Gastrocnemius medialis (tissue), 4 donors: ENCODE measurements at regions of chrX and their contacts with region 1.

Region 1: GRCh38 chrX:70433848-70434351 is 10.7 kb upstream of the DLG3 start:
- DNase-seq: peak; percentile 60 to 73
- ATAC-seq: peak; percentile 75 to 84
- H3K4me3 ChIP-seq: peak overlapping the region; percentile 68 to 79 (median 70)
- H3K27ac ChIP-seq: peak overlapping the region; percentile 83 to 91 (median 89)
- H3K4me1 ChIP-seq: peaks cover 0 to 8% of the 10 kb centered on the region in 2 donors
- H3K27me3 ChIP-seq: no peaks in the 10 kb centered on the region
- CTCF ChIP-seq: peak; percentile 48 to 76 (median 74)
- POLR2A ChIP-seq: no peak

Region 2: GRCh38 chrX:69493193-69493592 is 940.7 kb before region 1 on chrX:
- in situ Hi-C with region 1: no loop called
- intact Hi-C with region 1: no loop called
- DNase-seq: no peak
- ATAC-seq: no peak
- H3K4me3 ChIP-seq: no peak overlapping the region
- H3K27ac ChIP-seq: no peak overlapping the region
- H3K4me1 ChIP-seq: no peaks in the 10 kb centered on the region
- H3K27me3 ChIP-seq: no peaks in the 10 kb centered on the region
- CTCF ChIP-seq: peak in 3 of 5 experiments; percentile 25 to 41 (median 41)
- POLR2A ChIP-seq: no peak

Region 3: GRCh38 chrX:70133303-70134115 is 300.4 kb before region 1 on chrX and contains the start of gene IGBP1:
- in situ Hi-C with region 1: loop called in 3 of 4 experiments (anchors 25 kb)
- intact Hi-C with region 1: loop called (anchors 1 kb)
- DNase-seq: peak; percentile 72 to 81
- ATAC-seq: peak; percentile 99
- H3K4me3 ChIP-seq: peak within 1 kb of the TSS; percentile 60 to 96 (median 86)
- H3K27ac ChIP-seq: peak within 1 kb of the TSS; percentile 71 to 90 (median 81)
- H3K4me1 ChIP-seq: peaks cover 5 to 7% of the 10 kb centered on the region in 2 donors
- H3K27me3 ChIP-seq: no peaks in the 10 kb centered on the region
- CTCF ChIP-seq: peak; percentile 34 to 68 (median 56)
- POLR2A ChIP-seq: peak; percentile 11 to 35
- total RNA-seq, gene IGBP1: 68.7 to 109 (median 75.1) TPM

Region 4: DNA sequence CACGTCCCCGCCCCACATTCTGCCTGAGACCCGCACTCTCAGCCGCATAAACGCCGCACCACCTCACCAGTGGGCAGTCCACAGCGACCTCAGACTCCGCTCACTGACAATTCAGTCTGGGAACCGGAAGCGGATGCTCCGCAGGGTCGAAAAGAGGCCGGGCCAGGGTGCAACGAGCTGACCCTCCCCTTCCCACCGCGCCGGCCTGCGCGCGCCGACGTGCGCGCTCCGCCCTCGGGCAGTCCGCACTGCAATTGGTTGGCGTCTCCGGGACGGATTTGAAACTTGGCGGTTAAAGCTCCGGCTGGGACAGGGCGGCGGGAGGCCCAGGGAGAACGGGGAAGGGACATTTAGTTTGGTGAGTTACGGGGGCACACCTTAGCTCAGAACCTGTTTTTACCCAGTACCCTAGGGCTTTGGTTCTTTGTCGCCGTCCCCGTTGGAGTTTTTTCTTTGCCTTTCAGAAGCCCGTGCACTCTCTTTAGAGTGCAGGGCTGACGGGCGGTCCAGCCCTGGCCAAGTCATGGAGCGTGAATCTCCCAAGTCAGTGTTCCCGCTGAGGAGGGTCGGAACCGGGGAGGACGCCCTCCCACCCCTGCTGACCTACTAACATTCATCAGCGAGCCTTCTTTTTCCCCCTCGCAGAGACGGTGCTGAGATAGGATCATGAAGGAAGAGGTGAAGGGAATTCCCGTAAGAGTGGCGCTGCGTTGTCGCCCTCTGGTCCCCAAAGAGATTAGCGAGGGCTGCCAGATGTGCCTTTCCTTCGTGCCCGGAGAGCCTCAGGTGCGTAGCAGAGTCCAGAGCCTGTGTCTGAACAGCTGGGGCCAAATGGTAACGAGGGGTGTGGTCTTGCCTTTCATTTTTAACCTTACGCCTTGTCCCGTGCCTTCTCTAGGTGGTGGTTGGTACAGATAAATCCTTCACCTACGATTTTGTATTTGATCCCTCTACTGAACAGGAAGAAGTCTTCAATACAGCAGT is 143.8 kb before region 1 on chrX and contains the starts of genes KIF4A and PDZD11:
- in situ Hi-C with region 1: no loop called
- intact Hi-C with region 1: loop called (anchors 1 kb)
- DNase-seq: peak; percentile 56 to 72
- ATAC-seq: peak; percentile 85 to 99
- H3K4me3 ChIP-seq: peak within 1 kb of the TSS; percentile 55 to 64 (median 60)
- H3K27ac ChIP-seq: peak within 1 kb of the TSS; percentile 64 to 72 (median 69)
- H3K4me1 ChIP-seq: peaks cover 3 to 9% of the 10 kb centered on the region in 2 donors
- H3K27me3 ChIP-seq: no peaks in the 10 kb centered on the region
- CTCF ChIP-seq: no peak
- POLR2A ChIP-seq: peak in 1 of 2 donors; percentile 15
- total RNA-seq, gene KIF4A: 0.07 to 0.09 TPM in 2 of 4 donors, not detected in the others
- total RNA-seq, gene PDZD11: 12.8 to 22.3 (median 21.8) TPM